Aorta (tissue), 5 donors: ENCODE measurements at regions of chr3 and their contacts with region 1.

Region 1: GRCh38 chr3:156460206-156460611 is 94.7 kb downstream of the SSR3 start:
- DNase-seq: no peak
- ATAC-seq: no peak
- H3K4me3 ChIP-seq: no peak overlapping the region
- H3K27ac ChIP-seq: peak overlapping the region in 1 of 2 donors; percentile 33
- H3K4me1 ChIP-seq: peaks cover 5 to 6% of the 10 kb centered on the region in 2 donors
- H3K27me3 ChIP-seq: no peaks in the 10 kb centered on the region

Region 2: GRCh38 chr3:155946178-155946577 is 514.0 kb before region 1 on chr3:
- intact Hi-C with region 1: no loop called
- DNase-seq: no peak
- ATAC-seq: no peak
- H3K4me3 ChIP-seq: no peak overlapping the region
- H3K27ac ChIP-seq: peak overlapping the region in 1 of 2 donors; percentile 36
- H3K4me1 ChIP-seq: peaks cover 0 to 2% of the 10 kb centered on the region in 2 donors
- H3K27me3 ChIP-seq: no peaks in the 10 kb centered on the region

Region 3: DNA sequence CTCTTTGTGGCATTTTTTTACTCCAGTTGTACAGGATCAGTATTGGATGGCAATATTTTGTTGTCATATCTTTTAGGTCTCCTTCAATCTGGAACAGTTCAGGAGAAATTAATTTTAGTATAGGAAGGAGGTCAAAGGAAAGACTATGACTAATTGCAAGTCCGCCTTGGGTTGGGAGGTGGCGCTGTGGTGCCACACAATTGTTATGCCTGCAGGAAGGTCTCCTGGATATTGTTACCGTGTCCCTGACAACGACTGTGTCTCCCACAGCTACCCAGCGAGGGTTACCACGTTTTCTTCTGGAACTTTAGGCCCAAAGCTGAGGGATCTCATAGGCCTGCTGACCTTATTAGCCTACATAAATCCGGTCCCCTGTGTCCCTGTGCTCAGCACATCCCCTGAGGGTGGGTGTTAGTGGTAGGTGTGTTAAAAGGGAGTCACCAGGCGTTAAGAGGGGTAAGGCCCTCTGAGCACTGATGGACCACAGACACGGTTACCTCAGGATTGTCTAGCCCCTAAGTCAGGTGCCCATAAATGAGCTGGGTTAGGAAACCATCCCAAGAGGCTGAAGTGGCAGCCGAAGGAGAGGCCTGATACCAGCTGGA is 308.3 kb before region 1 on chr3:
- intact Hi-C with region 1: loop called in 1 of 2 experiments (anchors 5 kb)
- DNase-seq: peak; percentile 81 to 90
- ATAC-seq: peak; percentile 60
- H3K4me3 ChIP-seq: no peak overlapping the region
- H3K27ac ChIP-seq: peak overlapping the region in 1 of 2 donors; percentile 61
- H3K4me1 ChIP-seq: peaks cover 4 to 16% of the 10 kb centered on the region in 2 donors
- H3K27me3 ChIP-seq: no peaks in the 10 kb centered on the region

Region 4: GRCh38 chr3:156174229-156174847 is 285.9 kb before region 1 on chr3:
- intact Hi-C with region 1: loop called in 1 of 2 experiments (anchors 5 kb)
- DNase-seq: no peak
- ATAC-seq: no peak
- H3K4me3 ChIP-seq: no peak overlapping the region
- H3K27ac ChIP-seq: no peak overlapping the region
- H3K4me1 ChIP-seq: no peaks in the 10 kb centered on the region
- H3K27me3 ChIP-seq: no peaks in the 10 kb centered on the region

Region 5: GRCh38 chr3:156291272-156292123 is 168.7 kb before region 1 on chr3:
- intact Hi-C with region 1: loop called in 1 of 2 experiments (anchors 5 kb)
- DNase-seq: peak; percentile 57 to 77
- ATAC-seq: peak; percentile 53
- H3K4me3 ChIP-seq: peak overlapping the region; percentile 19 to 45
- H3K27ac ChIP-seq: no peak overlapping the region
- H3K4me1 ChIP-seq: no peaks in the 10 kb centered on the region
- H3K27me3 ChIP-seq: no peaks in the 10 kb centered on the region

Region 6: DNA sequence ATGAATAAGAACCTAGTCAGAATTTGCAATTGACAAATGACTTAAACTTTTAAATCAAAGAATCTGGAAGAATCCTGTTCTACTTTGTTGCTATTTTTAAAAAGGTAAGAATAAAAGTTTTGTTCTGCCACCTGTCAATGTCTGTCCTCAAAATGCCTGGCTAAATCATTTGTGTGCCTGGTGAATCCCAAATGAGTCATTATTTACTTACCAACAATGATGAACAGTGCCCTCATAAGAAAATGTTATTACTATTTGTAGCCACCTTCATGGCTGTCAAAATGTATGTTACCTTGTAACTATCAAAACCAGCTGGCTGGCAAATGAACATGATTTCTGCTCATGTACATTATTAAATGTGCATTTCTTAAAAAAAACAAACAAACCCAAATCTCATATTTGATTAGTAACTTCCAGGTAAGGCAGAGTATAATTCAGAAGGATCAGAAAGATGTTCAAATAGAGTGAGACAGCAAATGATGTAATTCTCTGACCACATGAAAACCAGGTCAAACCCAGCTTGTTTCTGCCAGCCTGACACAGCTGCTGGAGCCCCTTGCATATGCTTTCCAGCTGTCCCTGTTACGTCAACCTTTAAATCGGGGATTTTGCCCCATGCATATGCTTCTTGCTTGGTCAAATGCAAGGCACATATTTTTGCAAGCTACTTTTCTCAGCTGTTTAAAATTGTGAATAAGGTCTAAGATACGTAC is 43.2 kb before region 1 on chr3:
- intact Hi-C with region 1: no loop called
- DNase-seq: no peak
- ATAC-seq: no peak
- H3K4me3 ChIP-seq: no peak overlapping the region
- H3K27ac ChIP-seq: no peak overlapping the region
- H3K4me1 ChIP-seq: no peaks in the 10 kb centered on the region
- H3K27me3 ChIP-seq: no peaks in the 10 kb centered on the region

Region 7: GRCh38 chr3:156497326-156497725 is 37.1 kb after region 1 on chr3:
- intact Hi-C with region 1: loop called (anchors 5 to 10 kb)
- DNase-seq: no peak
- ATAC-seq: no peak
- H3K4me3 ChIP-seq: no peak overlapping the region
- H3K27ac ChIP-seq: peak overlapping the region in 1 of 2 donors; percentile 49
- H3K4me1 ChIP-seq: peaks cover under 1 to 3% of the 10 kb centered on the region in 2 donors
- H3K27me3 ChIP-seq: no peaks in the 10 kb centered on the region

Region 8: GRCh38 chr3:156554842-156555687 is 94.9 kb after region 1 on chr3 and contains the start of gene SSR3:
- intact Hi-C with region 1: no loop called
- DNase-seq: peak; percentile 100
- ATAC-seq: peak; percentile 100
- H3K4me3 ChIP-seq: peak within 1 kb of the TSS; percentile 43 to 61
- H3K27ac ChIP-seq: peak within 1 kb of the TSS in 1 of 2 donors; percentile 70
- H3K4me1 ChIP-seq: peaks cover 2 to 4% of the 10 kb centered on the region in 2 donors
- H3K27me3 ChIP-seq: no peaks in the 10 kb centered on the region
- total RNA-seq, gene SSR3: 120 to 135 TPM